ENCODE measurements at regions of chr2 and their contacts with region 1.

Region 1: DNA sequence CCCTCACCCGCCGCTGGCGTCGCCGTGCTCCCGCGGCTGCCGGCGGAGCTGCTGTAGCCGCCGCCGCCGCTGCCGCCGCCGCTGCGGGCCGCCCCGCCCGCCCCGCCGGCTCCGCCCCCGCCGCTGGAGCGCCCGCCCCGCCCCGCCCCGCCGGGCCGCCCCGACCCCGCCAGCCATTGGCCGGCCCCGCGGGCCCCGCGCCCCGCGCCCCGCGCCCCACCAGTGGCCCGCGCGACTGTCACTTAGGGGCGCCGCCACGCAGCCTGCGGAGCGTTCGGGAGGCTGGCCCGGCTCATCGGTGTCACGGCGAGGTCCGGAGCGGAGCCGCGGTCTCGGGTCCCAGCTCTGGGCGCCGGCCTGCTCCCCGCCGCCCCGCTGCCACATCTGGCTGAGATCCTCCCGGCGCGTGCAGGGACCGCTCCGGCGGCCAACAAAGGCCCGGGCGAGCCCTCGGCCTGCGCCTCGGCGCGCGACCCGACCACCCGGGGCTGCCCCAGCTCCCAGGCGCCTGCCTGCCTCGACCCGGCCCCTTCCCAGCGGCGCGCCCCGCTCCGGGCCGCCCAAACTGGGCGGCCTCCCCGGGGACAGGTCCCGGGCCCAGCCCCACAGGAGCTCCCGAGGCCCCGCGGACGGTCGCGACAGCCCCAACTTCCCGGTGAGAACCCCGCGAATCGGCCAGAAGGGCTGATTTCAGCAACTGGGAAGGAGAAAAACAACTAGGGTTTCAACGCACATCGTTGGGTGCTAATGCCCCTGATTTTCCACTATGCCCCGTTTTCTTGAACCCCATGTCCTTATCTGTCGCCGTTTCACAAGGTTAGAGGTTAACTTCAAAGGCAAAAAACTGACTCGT is at the start of gene MGAT4A:
- DNase-seq: peak; percentile 85
- H3K4me3 Mint-ChIP-seq: peak within 1 kb of the TSS; percentile 90
- H3K27ac Mint-ChIP-seq: peak within 1 kb of the TSS; percentile 90
- H3K4me1 Mint-ChIP-seq: peaks cover 61% of the 10 kb centered on the region
- H3K27me3 Mint-ChIP-seq: no peaks in the 10 kb centered on the region
- total RNA-seq, gene MGAT4A: 71.9 to 76.7 TPM

Region 2: DNA sequence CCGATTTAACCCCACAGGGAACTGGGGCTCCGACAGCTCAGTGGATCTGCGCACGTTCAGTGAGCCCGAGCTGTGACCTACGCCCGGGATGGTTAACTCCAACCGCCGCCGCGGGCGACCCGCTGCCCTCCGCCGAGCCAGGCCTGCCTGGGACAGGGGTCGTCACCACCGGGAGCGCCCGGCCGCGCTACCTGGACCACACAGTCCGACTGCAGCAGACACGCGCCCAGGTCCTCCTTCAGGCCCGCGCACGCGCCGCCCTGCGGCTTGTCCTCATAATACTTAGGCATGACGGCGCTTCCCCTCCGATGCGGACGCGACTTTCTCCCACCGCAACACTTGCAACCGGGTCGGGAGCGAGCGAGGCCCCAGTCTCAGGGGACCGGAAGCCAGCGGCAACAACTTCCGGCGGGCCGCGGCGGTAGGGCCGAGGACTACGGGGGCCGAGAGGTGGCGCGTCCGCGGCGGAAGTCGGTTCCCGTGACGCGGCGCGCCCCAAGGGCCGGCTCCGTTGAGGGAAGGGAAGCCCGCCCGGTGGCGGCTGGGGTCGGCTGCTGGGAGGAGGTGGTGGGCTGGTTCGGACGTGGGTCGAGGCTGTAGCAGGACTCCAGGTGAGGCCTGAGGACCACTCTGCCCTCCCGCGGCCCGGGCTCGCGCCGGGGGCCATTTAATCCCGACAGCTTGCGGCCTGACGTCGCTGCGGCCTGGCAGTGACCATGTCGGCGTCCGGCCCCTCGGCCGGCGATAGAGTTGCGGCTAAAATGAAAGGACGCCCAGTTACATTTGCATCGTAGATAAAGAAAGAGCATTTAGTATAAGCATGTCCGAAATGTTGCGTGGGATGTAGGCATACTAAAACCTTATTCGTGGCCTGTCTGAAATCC is 122.9 kb before region 1 on chr2 and contains the starts of genes COA5 and UNC50:
- CTCF ChIA-PET with region 1: no interaction called
- POLR2A ChIA-PET with region 1: interaction called, 4 read pairs
- intact Hi-C with region 1: loop called (anchors 2 kb)
- DNase-seq: peak; percentile 94
- H3K4me3 Mint-ChIP-seq: peak within 1 kb of the TSS; percentile 92
- H3K27ac Mint-ChIP-seq: peak within 1 kb of the TSS; percentile 82
- H3K4me1 Mint-ChIP-seq: peaks cover 61% of the 10 kb centered on the region
- H3K27me3 Mint-ChIP-seq: no peaks in the 10 kb centered on the region
- total RNA-seq, gene COA5: 26.7 to 28.5 TPM
- total RNA-seq, gene UNC50: 33.4 to 36.2 TPM

Region 3: GRCh38 chr2:98692090-98693054 is 38.9 kb before region 1 on chr2:
- CTCF ChIA-PET with region 1: interaction called, 3 read pairs
- POLR2A ChIA-PET with region 1: interaction called, 3 read pairs
- intact Hi-C with region 1: loop called (anchors 2 kb)
- DNase-seq: no peak
- H3K4me3 Mint-ChIP-seq: peak overlapping the region; percentile 51
- H3K27ac Mint-ChIP-seq: peak overlapping the region; percentile 92
- H3K4me1 Mint-ChIP-seq: peaks cover 80% of the 10 kb centered on the region
- H3K27me3 Mint-ChIP-seq: no peaks in the 10 kb centered on the region

Region 4: DNA sequence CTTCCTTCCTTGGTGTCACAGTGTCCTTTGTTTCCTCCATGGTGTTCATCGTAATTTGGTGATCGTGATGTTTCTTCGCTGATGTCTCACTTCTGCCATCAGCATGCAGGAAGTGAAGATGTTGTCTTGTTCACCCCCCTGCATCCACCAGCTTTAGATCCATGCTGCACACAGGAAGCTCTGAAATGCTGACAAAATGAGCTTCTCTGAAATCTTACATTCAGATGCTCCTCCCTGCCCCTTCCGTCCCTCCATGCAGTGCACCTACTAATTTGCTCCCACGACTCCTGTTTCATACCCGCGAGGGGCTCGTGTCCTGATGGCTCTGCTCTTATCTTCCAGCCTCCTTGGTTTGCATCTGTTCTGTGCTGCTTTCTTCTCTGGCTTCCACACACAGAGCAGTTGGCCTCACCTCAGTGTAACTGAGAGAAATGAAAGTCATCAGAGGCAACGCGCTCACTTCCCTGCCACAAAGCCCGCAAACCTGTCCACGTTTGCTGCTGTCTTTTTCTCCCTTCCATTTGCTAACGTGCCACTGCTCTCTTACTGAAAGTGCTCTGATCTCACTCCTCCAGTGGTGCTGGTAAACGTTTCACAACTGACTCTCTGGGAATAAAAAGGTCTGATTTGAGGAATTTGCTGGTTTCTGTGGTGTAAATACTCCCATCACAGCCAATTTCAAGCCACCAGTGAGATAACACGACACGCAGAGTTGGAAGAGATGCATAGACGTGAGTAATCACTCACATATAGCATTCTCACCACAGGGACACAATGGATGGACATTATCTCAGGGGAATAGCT is 40.7 kb after region 1 on chr2:
- CTCF ChIA-PET with region 1: interaction called, 6 read pairs
- POLR2A ChIA-PET with region 1: interaction called, 28 read pairs
- intact Hi-C with region 1: loop called (anchors 1 kb)
- DNase-seq: peak; percentile 77
- H3K4me3 Mint-ChIP-seq: peak overlapping the region; percentile 92
- H3K27ac Mint-ChIP-seq: peak overlapping the region; percentile 95
- H3K4me1 Mint-ChIP-seq: peaks cover 68% of the 10 kb centered on the region
- H3K27me3 Mint-ChIP-seq: no peaks in the 10 kb centered on the region

Region 5: GRCh38 chr2:99066075-99066958 is 335.1 kb after region 1 on chr2:
- CTCF ChIA-PET with region 1: no interaction called
- POLR2A ChIA-PET with region 1: no interaction called
- intact Hi-C with region 1: loop called (anchors 10 kb)
- DNase-seq: peak; percentile 46
- H3K4me3 Mint-ChIP-seq: no peak overlapping the region
- H3K27ac Mint-ChIP-seq: no peak overlapping the region
- H3K4me1 Mint-ChIP-seq: no peaks in the 10 kb centered on the region
- H3K27me3 Mint-ChIP-seq: no peaks in the 10 kb centered on the region